Activated T-helper 2 cell treated with anti-CD3 and anti-CD28 coated beads, Interferon-gamma antibody, Interleukin-2, Interleukin-4, amounts not matched to agents 10 μg/mL and 5 μg/mL and 100 μg/mL, durations not matched to agents 14 hours and 24 hours and 36 hours (primary cell): ENCODE measurements at regions of chr15 and their contacts with region 1.

Region 1: GRCh38 chr15:40694688-40695468 is at the start of gene RAD51:
- DNase-seq: peak; percentile 92
- H3K4me3 Mint-ChIP-seq: peak within 1 kb of the TSS; percentile 92
- H3K27ac Mint-ChIP-seq: peak within 1 kb of the TSS; percentile 99
- H3K4me1 Mint-ChIP-seq: peaks cover 29% of the 10 kb centered on the region
- H3K27me3 Mint-ChIP-seq: no peaks in the 10 kb centered on the region
- total RNA-seq, gene RAD51: 51.4 and 53.8 TPM in 2 replicates

Region 2: DNA sequence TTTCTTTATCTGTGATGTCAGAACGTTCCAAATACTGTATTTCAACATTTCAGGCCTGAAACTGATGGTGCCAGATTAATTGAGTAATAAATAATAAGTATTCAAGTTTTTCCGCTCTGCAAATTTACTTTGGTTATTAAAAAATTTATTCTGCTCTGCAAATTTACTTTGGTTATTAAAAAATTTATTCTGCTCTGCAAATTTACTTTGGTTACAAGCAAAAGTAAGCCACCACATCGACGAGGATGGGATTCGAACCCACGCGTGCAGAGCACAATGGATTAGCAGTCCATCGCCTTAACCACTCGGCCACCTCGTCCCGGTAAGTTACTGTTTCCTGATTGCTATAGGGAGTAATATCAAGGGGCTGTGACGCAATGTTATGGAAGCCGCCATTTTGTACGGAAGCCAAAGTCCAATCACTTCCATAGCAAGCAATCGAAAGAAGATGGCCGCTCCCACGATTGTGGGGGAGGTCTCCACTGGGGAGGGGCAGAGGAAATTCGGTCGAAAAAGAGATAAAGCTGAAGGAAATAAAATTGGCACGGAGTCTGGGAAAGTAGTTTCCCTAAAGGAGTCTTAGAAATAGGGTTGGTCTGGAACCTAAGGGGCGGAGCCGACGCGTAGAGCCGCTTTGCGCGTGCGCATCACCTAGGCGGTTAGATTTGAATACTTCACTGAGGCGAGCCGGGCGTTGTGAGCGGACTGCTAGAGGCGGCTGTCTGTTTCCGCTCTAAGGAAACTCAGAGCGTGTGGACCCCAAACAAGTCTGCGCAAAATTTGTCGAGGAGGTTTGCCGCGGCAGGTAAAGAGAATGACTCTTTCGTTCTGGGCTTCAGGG is 101.1 kb before region 1 on chr15 and contains the start of gene KNL1:
- intact Hi-C with region 1: loop called (anchors 10 kb)
- DNase-seq: peak; percentile 90
- H3K4me3 Mint-ChIP-seq: peak within 1 kb of the TSS; percentile 93
- H3K27ac Mint-ChIP-seq: peak within 1 kb of the TSS; percentile 99
- H3K4me1 Mint-ChIP-seq: peaks cover 24% of the 10 kb centered on the region
- H3K27me3 Mint-ChIP-seq: no peaks in the 10 kb centered on the region
- total RNA-seq, gene KNL1: 30.6 and 30.8 TPM in 2 replicates

Region 3: DNA sequence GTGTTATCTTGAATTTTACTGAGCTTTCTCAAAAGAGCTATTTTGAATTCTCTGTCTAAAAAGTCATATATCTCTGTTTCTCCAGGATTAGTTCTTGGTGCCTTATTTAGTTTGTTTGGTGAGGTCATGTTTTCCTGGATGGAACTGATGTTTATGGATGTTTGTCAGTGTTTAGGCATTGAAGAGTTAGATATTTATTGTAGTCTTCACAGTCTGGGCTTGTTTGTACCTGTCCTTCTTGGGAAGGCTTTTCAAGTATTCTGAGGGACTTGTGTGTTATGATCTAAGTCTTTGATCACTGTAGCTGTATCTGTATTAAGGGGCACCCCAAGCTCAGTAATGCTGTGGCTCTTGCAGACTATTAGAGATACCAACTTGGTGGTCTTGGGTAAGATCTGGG is 10.5 kb before region 1 on chr15:
- intact Hi-C with region 1: loop called (anchors 2 kb)
- DNase-seq: no peak
- H3K4me3 Mint-ChIP-seq: no peak overlapping the region
- H3K27ac Mint-ChIP-seq: no peak overlapping the region
- H3K4me1 Mint-ChIP-seq: no peaks in the 10 kb centered on the region
- H3K27me3 Mint-ChIP-seq: no peaks in the 10 kb centered on the region

Region 4: DNA sequence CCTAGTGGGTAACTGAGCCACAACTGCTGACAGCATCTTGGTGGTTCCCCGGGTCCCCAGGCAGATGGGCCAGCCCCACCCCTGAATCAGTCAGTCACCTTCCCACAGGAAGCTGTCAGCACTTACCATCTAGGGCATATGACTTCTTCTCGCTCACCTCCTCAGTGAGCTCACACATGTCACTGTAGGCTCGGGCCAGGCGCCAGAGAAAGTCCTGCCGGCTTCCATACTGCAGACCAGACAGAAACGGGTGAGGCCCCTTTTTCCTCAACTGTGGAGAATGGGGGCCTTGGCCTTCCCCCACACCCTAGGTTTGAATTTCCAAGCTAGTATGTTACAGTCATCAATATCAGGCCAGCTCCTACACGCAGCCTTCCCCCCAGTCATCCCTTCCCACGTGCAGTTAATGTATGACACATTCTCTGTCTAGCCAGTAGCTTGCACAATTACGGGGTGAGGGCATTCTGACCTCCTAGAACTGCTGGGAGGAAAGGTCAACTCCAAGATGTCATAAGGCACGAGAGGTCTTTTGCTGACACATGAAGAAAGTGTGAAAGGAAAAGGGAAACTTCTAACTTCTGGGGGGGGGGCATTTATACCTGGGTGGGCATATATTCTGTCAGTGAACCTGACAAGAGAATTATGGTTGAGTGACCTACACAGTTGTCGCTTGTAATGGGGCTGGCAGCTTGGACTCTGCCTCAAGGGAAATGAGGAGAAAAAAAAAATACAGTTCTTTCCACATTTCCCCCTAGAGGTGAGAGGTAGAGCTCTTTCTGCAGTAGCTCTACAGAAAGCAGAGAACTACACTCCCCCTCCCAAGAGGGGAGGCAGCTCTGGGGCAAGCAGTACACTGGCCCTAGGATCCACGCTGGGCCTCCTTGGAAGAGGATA is 49.3 kb after region 1 on chr15:
- intact Hi-C with region 1: loop called (anchors 1 kb)
- DNase-seq: peak; percentile 63
- H3K4me3 Mint-ChIP-seq: peak overlapping the region; percentile 42
- H3K27ac Mint-ChIP-seq: peak overlapping the region; percentile 92
- H3K4me1 Mint-ChIP-seq: peaks cover 24% of the 10 kb centered on the region
- H3K27me3 Mint-ChIP-seq: no peaks in the 10 kb centered on the region

Region 5: DNA sequence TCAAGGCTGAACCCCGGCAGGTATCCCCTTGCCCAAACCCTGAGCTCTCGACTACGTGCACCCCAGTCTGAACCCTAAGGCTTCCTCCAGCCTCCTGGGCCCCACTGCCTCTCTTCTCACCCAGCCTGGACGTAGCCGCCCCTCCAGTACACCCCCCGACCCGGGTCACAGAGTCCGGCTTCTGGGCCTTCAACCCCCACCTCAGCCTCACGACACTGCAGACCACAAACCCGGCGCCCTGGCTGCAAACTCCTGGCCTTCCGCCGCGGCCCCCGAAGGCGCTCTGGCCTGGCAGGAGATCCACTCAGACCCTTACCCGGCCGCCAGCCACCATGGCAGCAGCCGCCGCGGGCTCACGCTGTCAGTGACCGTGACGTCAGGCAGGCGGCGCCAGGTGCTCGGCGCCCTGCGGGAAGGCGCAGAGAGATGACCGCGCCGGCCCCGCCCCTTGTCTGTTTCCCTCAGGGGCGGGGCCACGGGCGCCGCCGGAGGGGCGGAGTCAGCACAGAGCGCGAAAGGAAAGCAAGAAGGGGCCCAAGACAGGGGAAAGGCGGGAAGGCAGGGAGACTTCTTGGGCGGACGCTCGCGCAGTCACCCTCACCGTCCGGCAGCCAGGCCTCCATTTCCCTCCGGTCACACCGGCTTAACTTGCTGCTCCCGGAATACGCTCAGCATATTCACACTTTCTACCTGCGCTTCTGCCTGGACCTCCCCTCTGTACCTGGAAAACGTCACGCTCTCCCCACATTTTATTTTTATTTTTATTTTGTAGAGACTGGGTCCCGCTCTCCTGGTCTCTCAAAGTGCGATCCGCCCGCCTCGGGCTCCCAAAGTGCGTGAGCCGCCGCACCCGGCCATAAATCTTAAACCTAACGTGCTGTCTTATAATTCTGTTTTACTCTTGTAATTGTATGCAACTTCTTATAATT is 60.3 kb after region 1 on chr15 and contains the start of gene RMDN3:
- intact Hi-C with region 1: loop called (anchors 2 kb)
- DNase-seq: peak; percentile 93
- H3K4me3 Mint-ChIP-seq: peak within 1 kb of the TSS; percentile 94
- H3K27ac Mint-ChIP-seq: peak within 1 kb of the TSS; percentile 98
- H3K4me1 Mint-ChIP-seq: peaks cover 27% of the 10 kb centered on the region
- H3K27me3 Mint-ChIP-seq: no peaks in the 10 kb centered on the region
- total RNA-seq, gene RMDN3: 28.3 and 30.6 TPM in 2 replicates

Region 6: DNA sequence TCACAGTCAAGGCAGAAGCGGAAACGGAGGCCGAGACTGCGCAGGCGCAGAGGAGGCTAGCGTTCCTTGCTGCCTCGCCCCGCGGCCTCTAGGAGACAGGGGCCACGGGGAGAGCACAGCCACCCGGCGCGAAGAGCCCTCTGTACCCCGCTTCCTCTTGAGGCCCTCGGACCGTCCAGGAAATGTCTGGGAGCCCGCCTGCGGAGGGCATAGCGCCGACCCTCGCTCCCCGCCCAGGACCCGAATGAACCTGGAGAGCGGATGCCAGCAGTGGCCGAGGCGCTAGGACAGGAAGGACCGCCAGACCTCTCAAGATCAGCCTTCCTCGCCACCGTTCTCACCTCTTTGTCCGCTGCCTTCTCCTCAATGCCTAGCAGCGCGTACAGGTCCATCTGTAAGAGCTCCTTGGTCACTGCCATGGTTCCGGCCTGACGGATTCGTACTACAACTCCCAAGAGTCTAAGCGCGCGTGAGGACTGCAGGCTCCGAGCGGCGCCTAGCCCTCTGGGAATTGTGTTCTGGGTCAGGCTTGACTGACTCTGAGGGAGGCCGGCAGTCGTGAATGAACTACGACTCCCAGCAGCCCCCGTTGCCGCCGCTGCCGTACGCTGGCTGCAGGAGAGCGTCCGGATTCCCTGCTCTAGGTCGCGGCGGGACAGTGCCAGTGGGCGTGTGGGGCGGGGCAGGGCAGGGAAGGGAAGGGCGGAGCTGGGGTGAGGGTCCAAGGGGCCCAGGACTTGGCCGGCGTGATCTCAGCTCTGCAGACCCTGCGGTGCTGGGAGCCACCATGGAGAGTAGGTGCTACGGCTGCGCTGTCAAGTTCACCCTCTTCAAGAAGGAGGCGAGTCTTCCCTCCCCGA is 112.4 kb after region 1 on chr15 and contains the starts of genes DNAJC17 and ZFYVE19:
- intact Hi-C with region 1: loop called (anchors 1 kb)
- DNase-seq: peak; percentile 93
- H3K4me3 Mint-ChIP-seq: peak within 1 kb of the TSS; percentile 96
- H3K27ac Mint-ChIP-seq: peak within 1 kb of the TSS; percentile 98
- H3K4me1 Mint-ChIP-seq: peaks cover 18% of the 10 kb centered on the region
- H3K27me3 Mint-ChIP-seq: no peaks in the 10 kb centered on the region
- total RNA-seq, gene DNAJC17: 44.4 and 48.0 TPM in 2 replicates
- total RNA-seq, gene ZFYVE19: 37.6 and 39.3 TPM in 2 replicates

Region 7: DNA sequence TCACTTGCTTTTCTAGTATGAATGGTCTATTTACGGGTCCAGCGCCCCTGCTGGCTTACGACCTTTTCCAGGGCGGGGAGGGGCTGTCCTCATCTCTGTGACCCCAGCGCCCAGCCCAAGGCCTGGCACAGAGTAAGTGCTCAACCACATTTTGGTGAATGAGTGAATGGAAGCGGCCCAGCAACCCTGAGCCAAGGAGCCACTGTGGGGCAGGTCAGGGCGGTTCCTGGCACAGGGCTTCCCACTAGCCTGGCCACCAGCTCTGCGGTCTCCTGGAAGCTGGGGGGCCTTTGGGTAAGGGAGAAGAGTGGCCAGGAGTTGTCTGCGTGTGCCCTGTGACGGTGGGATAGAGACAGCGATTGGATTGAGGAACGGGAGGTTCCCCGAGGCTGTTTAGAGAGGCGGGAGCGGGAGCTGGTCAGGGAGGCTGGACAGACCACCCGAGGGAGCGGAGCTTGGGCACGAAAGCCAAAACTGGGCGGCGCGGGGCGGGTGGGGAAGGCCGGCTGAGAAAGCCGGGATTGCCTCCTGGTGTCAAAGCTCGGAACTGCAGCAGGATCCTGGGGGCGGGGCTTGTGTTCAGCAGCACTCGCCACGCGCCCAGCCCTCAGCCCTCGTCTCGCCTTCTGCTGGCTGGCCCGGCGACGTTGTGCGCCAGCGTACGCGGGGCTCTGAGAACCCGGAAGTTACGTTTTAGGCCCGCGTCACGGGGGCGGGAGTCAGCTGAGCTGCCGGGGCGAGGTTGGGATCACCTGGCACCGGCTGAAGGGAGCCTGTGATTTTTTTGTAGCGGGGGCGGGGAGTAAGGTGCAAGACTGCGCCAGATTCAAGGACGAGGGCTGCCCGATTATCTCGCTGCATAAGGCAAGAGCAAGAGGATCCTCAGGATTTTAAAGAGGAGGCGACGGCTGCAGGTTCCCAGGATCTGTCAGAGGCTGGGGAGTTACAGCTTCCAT is 199.1 kb after region 1 on chr15 and contains the start of gene VPS18:
- intact Hi-C with region 1: loop called (anchors 5 kb)
- DNase-seq: peak; percentile 97
- H3K4me3 Mint-ChIP-seq: peak within 1 kb of the TSS; percentile 100
- H3K27ac Mint-ChIP-seq: peak within 1 kb of the TSS; percentile 97
- H3K4me1 Mint-ChIP-seq: peaks cover 20% of the 10 kb centered on the region
- H3K27me3 Mint-ChIP-seq: peaks cover 1% of the 10 kb centered on the region
- total RNA-seq, gene VPS18: 12.6 and 13.1 TPM in 2 replicates